ENCODE measurements at regions of chr16 and their contacts with region 1.

Region 1: GRCh38 chr16:81077076-81077940 is at the start of gene C16orf46:
- DNase-seq: peak; percentile 96 to 99 (median 96)
- H3K4me3 ChIP-seq: peak within 1 kb of the TSS; percentile 59 to 75
- H3K4me3 Mint-ChIP-seq: peak within 1 kb of the TSS in 1 of 8 donors; percentile 20
- H3K27ac ChIP-seq: peak within 1 kb of the TSS; percentile 95
- H3K27ac Mint-ChIP-seq: peak within 1 kb of the TSS in 2 of 7 donors; percentile 25 to 66
- H3K4me1 ChIP-seq: peaks cover 13% of the 10 kb centered on the region
- H3K4me1 Mint-ChIP-seq: peaks cover 0 to 4% (median 1%) of the 10 kb centered on the region in 4 donors
- H3K27me3 ChIP-seq: no peaks in the 10 kb centered on the region
- H3K27me3 Mint-ChIP-seq: no peaks in the 10 kb centered on the region
- total RNA-seq, gene C16orf46: 0.29 TPM in 1 of 2 experiments, not detected in the other

Region 2: GRCh38 chr16:81053761-81054160 is 23.5 kb before region 1 on chr16:
- CTCF ChIA-PET with region 1: no interaction called
- POLR2A ChIA-PET with region 1: no interaction called
- intact Hi-C with region 1: no loop called
- DNase-seq: no peak
- H3K4me3 ChIP-seq: no peak overlapping the region
- H3K4me3 Mint-ChIP-seq: no peak overlapping the region
- H3K27ac ChIP-seq: no peak overlapping the region
- H3K27ac Mint-ChIP-seq: no peak overlapping the region
- H3K4me1 ChIP-seq: no peaks in the 10 kb centered on the region
- H3K4me1 Mint-ChIP-seq: no peaks in the 10 kb centered on the region
- H3K27me3 ChIP-seq: no peaks in the 10 kb centered on the region
- H3K27me3 Mint-ChIP-seq: peaks cover 0 to 3% of the 10 kb centered on the region in 2 donors

Region 3: GRCh38 chr16:81095953-81096717 is 18.8 kb after region 1 on chr16 and contains the start of gene GCSH:
- CTCF ChIA-PET with region 1: interaction called, 4 read pairs
- POLR2A ChIA-PET with region 1: interaction called, 8 read pairs
- intact Hi-C with region 1: loop called (anchors 1 kb)
- DNase-seq: peak; percentile 97 to 99 (median 99)
- H3K4me3 ChIP-seq: peak within 1 kb of the TSS; percentile 69 to 73
- H3K4me3 Mint-ChIP-seq: peak within 1 kb of the TSS; percentile 67 to 90 (median 85)
- H3K27ac ChIP-seq: peak within 1 kb of the TSS; percentile 37
- H3K27ac Mint-ChIP-seq: peak within 1 kb of the TSS; percentile 18 to 83 (median 48)
- H3K4me1 ChIP-seq: peaks cover 11% of the 10 kb centered on the region
- H3K4me1 Mint-ChIP-seq: peaks cover 4 to 17% (median 5%) of the 10 kb centered on the region in 4 donors
- H3K27me3 ChIP-seq: no peaks in the 10 kb centered on the region
- H3K27me3 Mint-ChIP-seq: no peaks in the 10 kb centered on the region
- total RNA-seq, gene GCSH: 3.5 to 4.9 TPM

Region 4: GRCh38 chr16:81745704-81746558 is 668.6 kb after region 1 on chr16:
- CTCF ChIA-PET with region 1: no interaction called
- POLR2A ChIA-PET with region 1: no interaction called
- intact Hi-C with region 1: loop called (anchors 5 kb)
- DNase-seq: peak; percentile 63 to 74 (median 71)
- H3K4me3 ChIP-seq: peak overlapping the region; percentile 37 to 50
- H3K4me3 Mint-ChIP-seq: peak overlapping the region; percentile 76 to 94 (median 86)
- H3K27ac ChIP-seq: peak overlapping the region; percentile 38
- H3K27ac Mint-ChIP-seq: peak overlapping the region; percentile 75 to 93 (median 88)
- H3K4me1 ChIP-seq: peaks cover 12% of the 10 kb centered on the region
- H3K4me1 Mint-ChIP-seq: peaks cover 4 to 15% (median 9%) of the 10 kb centered on the region in 4 donors
- H3K27me3 ChIP-seq: no peaks in the 10 kb centered on the region
- H3K27me3 Mint-ChIP-seq: peaks cover 1 to 2% of the 10 kb centered on the region in 2 donors